PC-3 (cell line): ENCODE measurements at regions of chr1 and their contacts with region 1.

Region 1: DNA sequence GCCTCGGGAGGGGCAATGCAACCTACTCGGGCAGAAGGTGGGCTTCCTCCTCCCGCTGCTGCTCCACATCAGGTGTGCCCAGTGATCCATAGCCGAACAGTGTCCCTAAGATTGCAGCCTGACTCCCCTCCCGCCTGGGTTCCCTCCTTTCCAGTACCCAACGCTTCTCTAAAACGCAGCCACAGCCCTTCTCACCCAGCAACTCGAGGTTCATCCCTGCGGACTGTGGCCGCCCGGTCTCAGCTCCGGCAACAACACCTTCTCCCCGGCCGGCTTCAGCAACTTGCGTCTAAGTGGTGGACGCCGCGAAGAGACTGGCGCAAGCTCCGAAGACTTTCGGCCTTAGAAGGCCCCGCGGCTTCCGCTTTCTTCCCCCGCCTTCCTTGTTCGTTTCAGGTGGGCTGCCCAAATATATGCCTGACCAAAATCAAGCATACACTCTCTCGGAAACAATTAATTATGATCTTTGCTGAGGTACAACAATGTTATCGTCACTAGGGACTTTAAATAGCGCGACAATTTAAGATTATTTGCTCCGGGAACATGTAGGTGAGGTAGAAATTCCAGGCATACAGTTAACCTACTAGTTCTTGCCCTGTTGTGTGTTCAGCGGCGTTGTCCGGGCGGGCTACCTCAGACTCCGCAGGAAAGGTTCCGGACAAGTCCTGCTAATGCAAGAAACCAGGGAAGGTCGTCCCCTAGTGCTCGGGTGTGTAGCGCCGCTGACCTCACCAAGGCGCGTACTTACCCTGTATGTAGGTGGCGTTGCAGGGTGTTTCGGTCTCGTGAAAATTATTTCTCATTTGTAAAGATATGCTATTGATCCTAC is at the start of gene RBBP5:
- DNase-seq: peak; percentile 99
- ATAC-seq: peak; percentile 98
- H3K4me3 ChIP-seq: peak within 1 kb of the TSS; percentile 73
- H3K27ac ChIP-seq: peak within 1 kb of the TSS; percentile 72
- H3K4me1 ChIP-seq: peaks cover 24% of the 10 kb centered on the region
- H3K27me3 ChIP-seq: no peaks in the 10 kb centered on the region
- CTCF ChIP-seq: peak; percentile 98
- total RNA-seq, gene RBBP5: 39.5 and 41.7 TPM in 2 replicates

Region 2: GRCh38 chr1:205211169-205211838 is 89.4 kb after region 1 on chr1 and contains the start of gene DSTYK:
- CTCF ChIA-PET with region 1: no interaction called
- POLR2A ChIA-PET with region 1: no interaction called
- intact Hi-C with region 1: loop called (anchors 2 kb)
- DNase-seq: peak; percentile 97
- ATAC-seq: peak; percentile 90
- H3K4me3 ChIP-seq: peak within 1 kb of the TSS; percentile 89
- H3K27ac ChIP-seq: peak within 1 kb of the TSS; percentile 71
- H3K4me1 ChIP-seq: peaks cover 10% of the 10 kb centered on the region; the same call in 1 of the 2 replicates
- H3K27me3 ChIP-seq: no peaks in the 10 kb centered on the region
- CTCF ChIP-seq: no peak
- total RNA-seq, gene DSTYK: 8.4 and 9.3 TPM in 2 replicates